Activated CD4-positive, alpha-beta memory T cell treated with anti-CD3 and anti-CD28 coated beads for 36 hours (primary cell): ENCODE measurements at regions of chr11 and their contacts with region 1.

Region 1: DNA sequence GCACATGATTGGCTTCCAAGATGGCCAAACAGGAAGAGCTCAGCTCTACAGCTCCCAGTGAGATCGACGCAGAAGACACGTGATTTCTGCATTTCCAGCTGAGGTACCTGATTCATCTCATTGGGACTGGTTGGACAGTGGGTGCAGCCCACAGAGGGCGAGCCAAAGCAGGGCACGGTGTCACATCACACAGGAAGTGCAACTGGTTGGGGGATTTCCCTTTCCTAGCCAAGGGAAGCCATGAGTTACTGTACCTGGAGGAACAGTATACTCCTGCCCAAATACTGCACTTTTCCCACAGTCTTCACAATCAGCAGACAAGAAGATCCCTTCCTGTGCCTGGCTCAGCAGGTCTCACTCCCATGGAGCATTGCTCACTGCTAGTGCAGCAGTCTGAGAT is 131.2 kb downstream of the DLG2 start:
- DNase-seq: no peak
- H3K4me3 Mint-ChIP-seq: no peak overlapping the region
- H3K27ac Mint-ChIP-seq: no peak overlapping the region
- H3K4me1 Mint-ChIP-seq: no peaks in the 10 kb centered on the region
- H3K27me3 Mint-ChIP-seq: no peaks in the 10 kb centered on the region

Region 2: DNA sequence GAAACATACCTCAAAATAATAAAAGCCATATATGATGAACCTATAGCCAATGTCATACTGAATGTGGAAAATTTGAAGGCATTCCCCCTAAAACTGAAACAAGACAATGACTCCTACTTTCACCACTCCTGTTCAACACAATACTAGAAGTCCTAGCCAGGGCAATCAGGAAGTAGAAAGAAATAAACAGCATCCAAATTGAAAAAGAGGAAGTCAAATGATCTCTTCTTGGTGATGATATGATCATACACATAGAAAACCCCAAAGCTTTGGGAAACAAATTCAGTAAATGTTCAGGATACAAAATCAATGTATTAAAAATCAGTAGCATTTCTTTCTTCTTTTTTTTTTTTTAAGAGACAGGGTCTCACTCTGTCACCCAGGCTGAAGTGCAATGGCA is 21.4 kb after region 1 on chr11:
- CTCF ChIA-PET with region 1: no interaction called
- POLR2A ChIA-PET with region 1: no interaction called
- intact Hi-C with region 1: loop called (anchors 1 kb)
- DNase-seq: no peak
- H3K4me3 Mint-ChIP-seq: no peak overlapping the region
- H3K27ac Mint-ChIP-seq: no peak overlapping the region
- H3K4me1 Mint-ChIP-seq: no peaks in the 10 kb centered on the region
- H3K27me3 Mint-ChIP-seq: no peaks in the 10 kb centered on the region